GM23248 (cell line): ENCODE measurements at regions of chr15 and their contacts with region 1.

Region 1: GRCh38 chr15:90886041-90886614 is 1.8 kb downstream of the FES start:
- DNase-seq: peak; percentile 68
- H3K4me3 ChIP-seq: no peak overlapping the region
- H3K27ac ChIP-seq: no peak overlapping the region
- H3K4me1 ChIP-seq: peaks cover 4% of the 10 kb centered on the region; the same call in 1 of the 2 replicates
- H3K27me3 ChIP-seq: no peaks in the 10 kb centered on the region

Region 2: DNA sequence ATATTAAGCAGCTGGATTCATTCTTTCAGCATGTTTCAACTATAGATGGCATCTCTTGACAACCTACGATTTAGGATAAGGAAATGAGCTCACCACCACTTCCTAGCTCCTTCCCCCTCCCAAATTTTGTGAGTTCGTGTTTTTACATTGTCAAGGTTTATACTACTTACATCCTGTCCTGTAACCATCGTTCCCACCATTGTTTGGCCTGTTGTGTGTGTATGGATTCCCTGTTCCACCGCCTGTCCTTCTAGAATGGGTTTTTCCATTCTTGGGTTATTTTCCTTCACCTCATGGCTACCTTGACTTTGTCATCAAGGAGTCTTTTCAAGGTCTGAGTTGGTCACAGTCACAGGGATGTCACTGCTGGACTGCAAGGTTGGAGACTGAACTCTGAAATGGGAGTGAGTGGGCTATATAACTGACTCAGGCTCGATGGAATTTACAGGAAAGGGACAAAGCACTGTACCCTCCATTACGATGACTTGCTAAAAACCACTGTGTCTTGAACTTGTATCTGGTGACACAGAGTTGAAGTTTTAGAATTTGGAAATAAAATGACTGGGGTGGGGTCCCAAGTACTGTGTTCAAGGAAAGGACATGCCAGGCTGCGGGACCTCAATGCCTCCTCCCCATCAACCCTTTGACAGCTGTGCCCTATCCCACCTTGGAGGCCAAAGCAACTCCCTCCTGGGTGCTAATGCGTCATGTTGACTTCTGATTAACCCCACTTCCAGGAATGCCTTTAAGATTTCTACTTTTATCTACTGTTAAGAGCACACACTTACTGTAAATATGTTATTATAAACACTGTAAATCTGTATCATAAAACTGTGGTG is 235.8 kb before region 1 on chr15:
- in situ Hi-C with region 1: loop called (anchors 10 kb)
- DNase-seq: peak; percentile 26
- H3K4me3 ChIP-seq: no peak overlapping the region
- H3K27ac ChIP-seq: no peak overlapping the region
- H3K4me1 ChIP-seq: peaks cover 14% of the 10 kb centered on the region
- H3K27me3 ChIP-seq: no peaks in the 10 kb centered on the region